K562 (cell line): ENCODE measurements at regions of chr9 and their contacts with region 1.

Region 1: GRCh38 chr9:124721109-124721906 is 49.8 kb downstream of the NR6A1 start:
- DNase-seq: peak in 1 of 4 experiments; percentile 31
- ATAC-seq: peak; percentile 73
- H3K4me3 ChIP-seq: no peak overlapping the region
- H3K27ac ChIP-seq: peak overlapping the region; percentile 55; the same call in 1 of the 3 replicates
- H3K4me1 ChIP-seq: peaks cover 0 to 26% of the 10 kb centered on the region in 2 experiments; a peak in 3 of 5 replicates
- H3K27me3 ChIP-seq: no peaks in the 10 kb centered on the region
- CTCF ChIP-seq: no peak
- EP300 ChIP-seq: no peak
- POLR2A ChIP-seq: no peak
- RAD21 ChIP-seq: no peak

Region 2: GRCh38 chr9:124415102-124415851 is 306.0 kb before region 1 on chr9 and contains the start of gene PSMB7:
- CTCF ChIA-PET with region 1: interaction called, 3 read pairs
- POLR2A ChIA-PET with region 1: no interaction called
- in situ Hi-C with region 1: loop called (anchors 25 kb)
- intact Hi-C with region 1: no loop called
- DNase-seq: peak; percentile 94 to 98 (median 94)
- ATAC-seq: peak; percentile 95
- H3K4me3 ChIP-seq: peak within 1 kb of the TSS; percentile 89
- H3K27ac ChIP-seq: peak within 1 kb of the TSS; percentile 89
- H3K4me1 ChIP-seq: peaks cover 9 to 12% of the 10 kb centered on the region in 2 experiments; a peak in 4 of 5 replicates
- H3K27me3 ChIP-seq: no peaks in the 10 kb centered on the region
- CTCF ChIP-seq: peak; percentile 66 to 94 (median 86)
- EP300 ChIP-seq: peak; percentile 45; the same call in 1 of the 2 replicates
- POLR2A ChIP-seq: peak; percentile 92
- RAD21 ChIP-seq: no peak
- polyA plus RNA-seq, gene PSMB7: 940 to 978 TPM

Region 3: DNA sequence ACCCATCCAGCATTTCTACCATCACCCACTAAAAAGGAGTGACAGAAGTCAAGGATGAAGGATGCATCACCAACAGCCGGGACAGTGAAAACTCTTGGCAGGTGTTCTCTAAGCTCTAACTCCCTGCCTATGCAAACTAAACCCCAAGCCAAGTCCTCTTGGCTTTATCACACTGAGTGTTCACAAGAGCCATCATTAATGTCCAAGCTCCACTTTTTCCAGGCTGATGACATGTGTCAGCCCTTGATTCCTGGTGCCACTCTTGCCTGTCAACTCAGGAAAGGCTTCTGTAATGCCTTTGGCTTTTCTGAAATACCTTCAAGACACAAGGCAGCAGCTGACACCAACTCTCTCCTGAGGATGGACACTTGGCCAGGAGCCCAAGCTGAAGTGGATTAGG is 37.1 kb before region 1 on chr9:
- CTCF ChIA-PET with region 1: no interaction called
- POLR2A ChIA-PET with region 1: no interaction called
- in situ Hi-C with region 1: no loop called
- intact Hi-C with region 1: no loop called
- DNase-seq: no peak
- ATAC-seq: no peak
- H3K4me3 ChIP-seq: no peak overlapping the region
- H3K27ac ChIP-seq: no peak overlapping the region
- H3K4me1 ChIP-seq: peaks cover 0 to 3% of the 10 kb centered on the region in 2 experiments; a peak in 1 of 5 replicates
- H3K27me3 ChIP-seq: no peaks in the 10 kb centered on the region
- CTCF ChIP-seq: no peak
- EP300 ChIP-seq: no peak
- POLR2A ChIP-seq: no peak
- RAD21 ChIP-seq: no peak

Region 4: DNA sequence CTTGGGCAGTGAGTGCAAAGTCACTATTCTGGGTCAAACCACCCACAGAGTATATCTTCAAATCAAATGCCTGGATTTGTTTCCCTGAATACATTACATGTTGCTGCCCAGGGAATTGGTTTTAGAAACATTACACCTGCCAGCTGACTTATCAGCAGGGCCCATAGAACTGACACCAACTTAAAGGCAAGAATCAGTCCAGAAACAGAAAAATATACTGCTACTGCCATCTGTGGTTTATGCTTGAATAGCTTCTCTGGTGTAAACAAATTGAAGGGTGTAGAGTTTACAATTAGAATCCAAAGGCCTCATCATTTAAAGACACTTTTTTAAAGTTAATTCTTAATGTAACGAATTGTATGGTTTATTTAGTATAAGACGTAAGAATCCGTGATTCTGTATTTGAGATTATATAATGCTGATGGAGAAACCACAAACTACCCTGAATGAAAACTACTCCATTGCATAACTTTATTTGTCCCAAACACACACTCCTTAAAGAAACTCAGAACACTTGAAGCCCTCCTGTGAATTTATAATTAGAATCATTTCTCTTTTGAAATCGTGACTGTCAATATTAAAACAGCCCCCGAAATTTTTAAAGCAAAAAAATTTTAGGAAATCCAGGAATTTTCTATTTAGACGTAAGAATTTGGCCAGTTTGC is 43.6 kb after region 1 on chr9:
- CTCF ChIA-PET with region 1: no interaction called
- POLR2A ChIA-PET with region 1: interaction called, 3 read pairs
- in situ Hi-C with region 1: loop called (anchors 5 kb)
- intact Hi-C with region 1: no loop called
- DNase-seq: peak in 3 of 4 experiments; percentile 25 to 55 (median 51)
- ATAC-seq: peak; percentile 69
- H3K4me3 ChIP-seq: no peak overlapping the region
- H3K27ac ChIP-seq: no peak overlapping the region
- H3K4me1 ChIP-seq: peaks cover 2 to 31% of the 10 kb centered on the region in 2 experiments
- H3K27me3 ChIP-seq: no peaks in the 10 kb centered on the region
- CTCF ChIP-seq: peak; percentile 42 to 72 (median 59); a peak in 5 of 6 replicates
- EP300 ChIP-seq: no peak
- POLR2A ChIP-seq: no peak
- RAD21 ChIP-seq: peak; percentile 41 to 70